BJ (cell line): ENCODE measurements at regions of chr6 and their contacts with region 1.

Region 1: GRCh38 chr6:134908906-134909516 is 40.9 kb downstream of the ALDH8A1 start:
- DNase-seq: peak; percentile 98
- H3K4me3 ChIP-seq: peak overlapping the region; percentile 0; the same call in 1 of the 2 replicates
- H3K27me3 ChIP-seq: no peaks in the 10 kb centered on the region
- CTCF ChIP-seq: no peak

Region 2: DNA sequence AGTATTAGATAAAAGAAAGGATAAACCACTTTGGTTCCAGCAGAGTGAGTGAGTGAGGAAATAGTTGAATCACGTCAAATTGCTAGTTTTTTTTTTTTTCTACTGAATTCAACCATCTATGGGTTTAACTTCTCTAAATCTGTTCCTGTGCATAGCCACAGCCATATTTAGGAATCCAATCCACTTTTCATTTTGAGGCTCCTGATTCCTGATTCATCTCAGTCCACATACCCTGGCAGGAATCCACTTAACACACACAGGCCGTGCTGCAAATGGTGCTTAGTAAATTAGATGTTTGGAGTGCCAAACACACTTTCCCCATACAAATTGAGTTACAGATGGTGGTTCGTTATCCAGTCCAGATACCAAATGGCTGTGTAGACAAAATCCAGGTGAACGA is 179.4 kb before region 1 on chr6:
- CTCF ChIA-PET with region 1: no interaction called
- POLR2A ChIA-PET with region 1: interaction called, 11 read pairs
- DNase-seq: no peak
- H3K4me3 ChIP-seq: no peak overlapping the region
- H3K27me3 ChIP-seq: no peaks in the 10 kb centered on the region
- CTCF ChIP-seq: no peak

Region 3: DNA sequence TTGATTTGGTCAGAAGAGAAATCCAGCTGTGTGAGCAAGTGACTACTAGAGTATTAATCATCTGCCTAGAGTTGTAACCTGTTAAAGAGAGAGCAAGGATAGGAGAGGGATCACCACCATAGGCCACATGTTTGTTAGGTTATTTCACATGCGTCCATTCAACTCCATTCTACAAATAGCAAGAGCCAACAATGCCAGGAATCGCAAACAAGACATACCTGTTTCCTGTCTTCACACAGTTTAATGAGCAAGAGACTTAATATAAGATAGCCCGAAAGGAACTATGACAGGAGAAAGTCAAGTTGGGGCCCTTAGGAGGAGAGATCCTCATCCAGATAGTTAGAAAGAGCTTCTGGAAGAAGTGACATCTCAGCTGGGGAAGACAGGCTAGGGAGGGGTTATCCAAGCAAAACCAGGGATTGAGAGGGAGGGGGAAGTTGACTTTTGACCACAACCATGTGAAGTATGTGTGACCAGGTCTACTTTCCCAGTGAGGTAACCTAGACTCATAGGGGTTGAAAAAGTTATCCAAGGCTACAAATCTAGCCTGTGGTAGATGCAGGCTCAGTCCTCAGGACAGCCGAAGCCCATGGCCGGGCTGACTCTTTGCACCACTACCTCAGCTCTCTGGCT is 106.5 kb before region 1 on chr6:
- CTCF ChIA-PET with region 1: no interaction called
- POLR2A ChIA-PET with region 1: no interaction called
- DNase-seq: no peak
- H3K4me3 ChIP-seq: no peak overlapping the region
- H3K27me3 ChIP-seq: no peaks in the 10 kb centered on the region
- CTCF ChIP-seq: no peak

Region 4: GRCh38 chr6:134814086-134814709 is 94.8 kb before region 1 on chr6:
- CTCF ChIA-PET with region 1: no interaction called
- POLR2A ChIA-PET with region 1: no interaction called
- DNase-seq: no peak
- H3K4me3 ChIP-seq: no peak overlapping the region
- H3K27me3 ChIP-seq: no peaks in the 10 kb centered on the region
- CTCF ChIP-seq: no peak